ENCODE measurements at regions of chr16 and their contacts with region 1.

Region 1: GRCh38 chr16:2340564-2341455 is at the start of gene ABCA3:
- DNase-seq: peak; percentile 95
- H3K4me3 ChIP-seq: peak within 1 kb of the TSS; percentile 70
- H3K27ac ChIP-seq: no peak within 1 kb of the TSS
- H3K4me1 ChIP-seq: peaks cover 4% of the 10 kb centered on the region
- H3K27me3 ChIP-seq: peaks cover 5% of the 10 kb centered on the region
- CTCF ChIP-seq: peak; percentile 99
- total RNA-seq, gene ABCA3: 1.3 to 4.6 TPM

Region 2: GRCh38 chr16:2429034-2429770 is 88.4 kb after region 1 on chr16 and contains the start of gene CCNF:
- intact Hi-C with region 1: loop called (anchors 5 kb)
- DNase-seq: peak; percentile 98
- H3K4me3 ChIP-seq: peak within 1 kb of the TSS; percentile 81
- H3K27ac ChIP-seq: peak within 1 kb of the TSS; percentile 49
- H3K4me1 ChIP-seq: peaks cover 7% of the 10 kb centered on the region
- H3K27me3 ChIP-seq: no peaks in the 10 kb centered on the region
- CTCF ChIP-seq: no peak
- total RNA-seq, gene CCNF: 8.6 to 38.2 TPM

Region 3: DNA sequence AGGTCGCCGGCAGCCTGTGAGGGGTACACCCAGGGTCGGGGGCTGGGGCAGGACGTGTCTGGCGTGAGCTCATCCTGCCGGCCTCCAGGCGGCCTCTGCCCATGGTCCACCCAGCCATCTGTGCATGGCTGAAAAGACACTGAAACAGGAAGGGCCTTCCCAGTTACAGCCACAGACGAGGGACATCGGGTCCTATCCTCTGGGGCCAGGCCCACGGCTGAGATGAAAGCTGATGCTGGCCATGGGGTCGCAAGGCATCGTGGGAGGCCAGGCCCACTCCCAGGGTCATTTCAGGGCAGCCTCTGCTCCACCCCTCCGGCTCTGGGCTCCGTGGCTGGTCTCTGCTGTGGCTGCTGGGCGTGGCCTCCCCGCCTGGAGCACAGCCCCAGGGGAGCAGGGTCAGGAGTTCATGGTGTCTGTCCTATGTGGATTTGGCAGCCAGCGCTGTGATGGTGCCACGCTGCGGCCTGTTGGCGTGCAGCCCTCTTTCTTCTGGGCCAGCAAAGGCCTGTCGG is 156.4 kb after region 1 on chr16:
- intact Hi-C with region 1: loop called (anchors 5 kb)
- DNase-seq: no peak
- H3K4me3 ChIP-seq: no peak overlapping the region
- H3K27ac ChIP-seq: no peak overlapping the region
- H3K4me1 ChIP-seq: peaks cover 3% of the 10 kb centered on the region
- H3K27me3 ChIP-seq: no peaks in the 10 kb centered on the region
- CTCF ChIP-seq: no peak

Measured in colonic mucosa (tissue), 4 donors.